Ascending aorta (tissue), 2 donors: ENCODE measurements at regions of chr18 and their contacts with region 1.

Region 1: GRCh38 chr18:2547477-2548087 is 23.7 kb downstream of the METTL4 start:
- DNase-seq: no peak
- H3K4me3 ChIP-seq: no peak overlapping the region
- H3K27ac ChIP-seq: no peak overlapping the region
- H3K4me1 ChIP-seq: no peaks in the 10 kb centered on the region
- H3K27me3 ChIP-seq: no peaks in the 10 kb centered on the region
- CTCF ChIP-seq: peak; percentile 18 to 57 (median 34)

Region 2: DNA sequence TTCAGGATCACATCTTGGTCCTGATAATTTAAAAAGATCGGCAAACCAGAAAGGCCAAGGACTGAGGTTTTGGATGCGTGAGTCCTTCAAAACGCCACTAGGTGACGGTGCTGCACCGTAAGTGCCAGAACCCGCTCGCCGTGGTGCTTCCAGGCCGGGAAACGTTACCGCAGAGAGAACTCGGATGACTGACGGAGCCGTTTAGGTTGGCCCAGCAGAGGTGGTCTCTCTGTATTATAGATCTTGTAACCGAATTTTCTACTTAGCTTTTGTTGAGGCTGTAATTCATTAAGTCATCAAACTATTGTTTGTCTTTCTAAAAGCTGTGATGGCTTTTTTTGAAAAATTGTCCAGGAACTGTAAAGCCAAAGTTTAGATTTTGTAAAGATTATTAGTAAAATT is 1682.7 kb before region 1 on chr18:
- intact Hi-C with region 1: loop called (anchors 10 kb)
- DNase-seq: peak in 1 of 2 donors; percentile 79
- H3K4me3 ChIP-seq: no peak overlapping the region
- H3K27ac ChIP-seq: no peak overlapping the region
- H3K4me1 ChIP-seq: no peaks in the 10 kb centered on the region
- H3K27me3 ChIP-seq: no peaks in the 10 kb centered on the region
- CTCF ChIP-seq: peak; percentile 90 to 97 (median 96)

Region 3: GRCh38 chr18:1585879-1586488 is 961.6 kb before region 1 on chr18:
- intact Hi-C with region 1: loop called (anchors 10 kb)
- DNase-seq: no peak
- H3K4me3 ChIP-seq: no peak overlapping the region
- H3K27ac ChIP-seq: no peak overlapping the region
- H3K4me1 ChIP-seq: no peaks in the 10 kb centered on the region
- H3K27me3 ChIP-seq: no peaks in the 10 kb centered on the region
- CTCF ChIP-seq: peak in 2 of 3 experiments; percentile 8 to 40

Region 4: GRCh38 chr18:2173464-2173863 is 374.1 kb before region 1 on chr18:
- intact Hi-C with region 1: no loop called
- DNase-seq: no peak
- H3K4me3 ChIP-seq: no peak overlapping the region
- H3K27ac ChIP-seq: no peak overlapping the region
- H3K4me1 ChIP-seq: no peaks in the 10 kb centered on the region
- H3K27me3 ChIP-seq: no peaks in the 10 kb centered on the region
- CTCF ChIP-seq: no peak

Region 5: GRCh38 chr18:2337552-2338141 is 209.9 kb before region 1 on chr18:
- intact Hi-C with region 1: loop called (anchors 2 kb)
- DNase-seq: no peak
- H3K4me3 ChIP-seq: no peak overlapping the region
- H3K27ac ChIP-seq: no peak overlapping the region
- H3K4me1 ChIP-seq: no peaks in the 10 kb centered on the region
- H3K27me3 ChIP-seq: no peaks in the 10 kb centered on the region
- CTCF ChIP-seq: peak in 2 of 3 experiments; percentile 34 to 46

Region 6: DNA sequence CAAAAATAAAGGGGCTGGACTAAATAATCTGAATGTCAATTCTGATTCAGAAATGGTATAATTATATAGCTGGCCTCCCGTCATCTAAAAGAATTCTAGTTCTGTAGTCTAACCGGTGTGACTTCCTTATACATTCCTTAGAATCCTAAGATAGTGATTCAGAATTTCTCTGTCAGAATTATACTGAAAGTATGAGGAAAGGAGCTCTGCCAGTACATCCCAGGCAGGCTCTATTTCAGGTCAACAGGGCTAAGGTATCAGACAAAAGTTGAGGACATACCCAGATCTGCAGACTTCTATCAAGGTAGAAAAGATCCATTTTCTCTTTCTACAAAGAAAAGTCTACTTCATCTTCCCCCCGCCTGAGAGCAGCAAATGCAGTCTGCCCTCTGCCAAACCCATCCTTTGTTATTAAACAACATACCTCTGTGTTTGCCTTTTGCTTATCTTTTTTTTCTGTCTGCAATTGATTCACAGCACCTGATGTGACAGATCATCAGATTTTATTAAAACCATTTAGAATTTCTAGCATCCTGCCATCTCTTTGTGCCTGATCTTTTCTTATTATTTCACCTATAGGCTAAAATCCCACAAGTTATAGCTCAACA is 104.7 kb before region 1 on chr18:
- intact Hi-C with region 1: no loop called
- DNase-seq: no peak
- H3K4me3 ChIP-seq: no peak overlapping the region
- H3K27ac ChIP-seq: no peak overlapping the region
- H3K4me1 ChIP-seq: no peaks in the 10 kb centered on the region
- H3K27me3 ChIP-seq: no peaks in the 10 kb centered on the region
- CTCF ChIP-seq: no peak